ENCODE measurements at regions of chrX and their contacts with region 1.

Region 1: DNA sequence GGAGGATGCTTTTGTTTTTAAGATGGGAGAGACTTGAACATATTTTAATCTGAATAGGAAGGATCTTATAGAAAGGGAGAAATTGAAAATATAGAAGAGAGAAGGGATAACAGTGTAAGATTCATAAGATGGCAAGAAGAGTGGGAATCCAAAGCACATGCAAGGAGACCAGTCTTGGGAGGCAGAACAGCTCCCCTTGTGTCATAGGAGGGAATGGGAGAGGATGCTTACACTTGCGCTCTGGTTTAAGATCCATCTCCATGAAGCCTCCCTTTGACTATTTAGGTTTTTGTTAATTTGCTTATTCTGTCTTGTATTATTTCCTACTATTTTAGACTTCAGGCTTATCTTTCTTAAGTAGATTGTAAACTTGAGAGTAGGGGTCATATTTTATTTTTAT is 42.7 kb downstream of the KIF4A start:
- DNase-seq: no peak
- CTCF ChIP-seq: no peak

Region 2: DNA sequence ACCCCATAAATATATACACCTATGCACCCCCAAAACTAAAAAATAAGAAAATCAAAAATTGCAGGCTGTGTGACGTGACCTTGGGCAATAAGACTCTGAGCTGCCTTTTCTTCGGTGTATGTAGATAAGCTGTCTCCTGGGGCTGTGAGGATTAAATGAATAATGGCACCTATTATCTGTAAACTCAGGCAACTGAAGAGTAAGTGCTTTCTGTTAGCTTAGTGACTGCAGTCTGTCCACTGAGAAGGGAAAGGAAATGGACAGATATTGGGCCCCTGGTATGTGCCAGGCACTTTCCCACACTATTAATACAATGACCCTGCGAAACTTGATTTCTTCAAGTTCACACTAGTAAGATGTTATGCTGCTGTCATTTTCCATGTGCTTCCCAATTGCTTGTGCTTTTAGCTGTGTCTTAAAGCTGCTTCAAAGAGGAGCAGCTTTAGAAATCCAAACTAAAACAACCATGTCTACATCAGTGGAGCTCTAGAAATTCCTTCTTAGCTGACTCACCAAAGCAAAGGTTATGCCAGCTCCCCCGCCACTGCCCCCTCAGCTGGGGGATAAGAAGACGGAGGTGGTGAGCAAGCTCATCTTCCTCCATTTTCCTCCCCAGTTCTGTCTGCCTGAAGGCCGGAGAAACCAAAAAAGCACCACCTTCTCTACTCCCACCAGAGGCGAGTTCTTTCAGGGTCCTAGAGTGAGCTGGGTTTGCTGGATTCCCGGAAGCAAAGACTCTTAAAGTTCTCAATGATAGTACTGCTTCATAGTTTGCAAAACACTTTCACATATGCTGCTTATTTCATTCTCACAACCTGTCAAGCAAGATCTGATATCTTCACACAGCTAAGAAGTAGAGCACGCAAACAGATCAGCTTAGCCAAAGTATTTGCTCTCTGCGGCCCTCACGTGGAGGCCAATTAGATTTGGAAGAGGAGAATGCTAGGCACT is 164.1 kb before region 1 on chrX:
- CTCF ChIA-PET with region 1: no interaction called
- POLR2A ChIA-PET with region 1: no interaction called
- DNase-seq: no peak
- CTCF ChIP-seq: no peak

Region 3: GRCh38 chrX:70343435-70343834 is 10.8 kb after region 1 on chrX:
- CTCF ChIA-PET with region 1: interaction called, 13 read pairs
- POLR2A ChIA-PET with region 1: no interaction called
- DNase-seq: no peak
- CTCF ChIP-seq: no peak

Measured in GM10248 (cell line).